ENCODE measurements at regions of chr1 and their contacts with region 1.

Region 1: GRCh38 chr1:84143796-84144565 is at the start of gene PRKACB:
- DNase-seq: peak; percentile 52 to 68 (median 58)
- H3K4me3 ChIP-seq: peak within 1 kb of the TSS; percentile 49 to 93
- H3K4me3 Mint-ChIP-seq: peak within 1 kb of the TSS; percentile 94 to 100 (median 98)
- H3K27ac ChIP-seq: peak within 1 kb of the TSS; percentile 54
- H3K27ac Mint-ChIP-seq: peak within 1 kb of the TSS; percentile 91 to 99 (median 97)
- H3K4me1 ChIP-seq: peaks cover 44% of the 10 kb centered on the region
- H3K4me1 Mint-ChIP-seq: peaks cover 22 to 57% (median 30%) of the 10 kb centered on the region in 4 donors
- H3K27me3 ChIP-seq: no peaks in the 10 kb centered on the region
- H3K27me3 Mint-ChIP-seq: no peaks in the 10 kb centered on the region
- total RNA-seq, gene PRKACB: 128 to 131 TPM

Region 2: DNA sequence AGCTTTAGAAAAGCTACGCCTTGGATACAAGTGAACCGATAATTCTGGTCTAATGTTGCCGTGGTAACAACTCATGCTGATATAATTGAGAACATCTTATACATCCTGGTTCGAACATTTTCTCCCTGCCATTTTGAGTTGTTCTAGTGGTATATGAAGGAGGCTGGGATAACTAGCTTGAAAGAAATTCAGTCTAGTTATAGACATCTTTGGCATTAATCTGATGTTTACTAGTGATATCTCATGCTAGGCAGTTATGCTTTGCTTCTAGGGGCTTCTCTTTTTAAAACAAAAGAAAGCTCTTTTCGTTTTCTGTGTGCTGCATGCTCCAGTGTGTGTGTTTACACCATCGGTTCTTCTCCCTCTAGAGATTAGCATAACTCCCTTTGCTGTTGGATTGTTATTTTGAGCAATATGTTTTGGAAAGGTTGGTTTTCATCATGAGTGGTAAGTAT is 20.6 kb after region 1 on chr1:
- CTCF ChIA-PET with region 1: interaction called, 4 read pairs
- POLR2A ChIA-PET with region 1: interaction called, 14 read pairs
- intact Hi-C with region 1: no loop called
- DNase-seq: no peak
- H3K4me3 ChIP-seq: no peak overlapping the region
- H3K4me3 Mint-ChIP-seq: peak overlapping the region; percentile 22 to 55 (median 50)
- H3K27ac ChIP-seq: no peak overlapping the region
- H3K27ac Mint-ChIP-seq: peak overlapping the region in 3 of 7 donors; percentile 2 to 19 (median 10)
- H3K4me1 ChIP-seq: peaks cover 82% of the 10 kb centered on the region
- H3K4me1 Mint-ChIP-seq: peaks cover 60 to 84% (median 74%) of the 10 kb centered on the region in 4 donors
- H3K27me3 ChIP-seq: no peaks in the 10 kb centered on the region
- H3K27me3 Mint-ChIP-seq: no peaks in the 10 kb centered on the region

Region 3: GRCh38 chr1:84301004-84301784 is 157.2 kb after region 1 on chr1 and contains the start of gene SAMD13:
- CTCF ChIA-PET with region 1: interaction called, 6 read pairs
- POLR2A ChIA-PET with region 1: interaction called, 5 read pairs
- intact Hi-C with region 1: loop called (anchors 2 kb)
- DNase-seq: peak; percentile 37 to 51 (median 47)
- H3K4me3 ChIP-seq: no peak within 1 kb of the TSS
- H3K4me3 Mint-ChIP-seq: peak within 1 kb of the TSS in 7 of 8 donors; percentile 15 to 64 (median 33)
- H3K27ac ChIP-seq: no peak within 1 kb of the TSS
- H3K27ac Mint-ChIP-seq: no peak within 1 kb of the TSS
- H3K4me1 ChIP-seq: peaks cover 35% of the 10 kb centered on the region
- H3K4me1 Mint-ChIP-seq: peaks cover 13 to 40% (median 31%) of the 10 kb centered on the region in 4 donors
- H3K27me3 ChIP-seq: peaks cover 3% of the 10 kb centered on the region
- H3K27me3 Mint-ChIP-seq: peaks cover 4 to 17% of the 10 kb centered on the region in 2 donors
- total RNA-seq, gene SAMD13: not detected

Region 4: DNA sequence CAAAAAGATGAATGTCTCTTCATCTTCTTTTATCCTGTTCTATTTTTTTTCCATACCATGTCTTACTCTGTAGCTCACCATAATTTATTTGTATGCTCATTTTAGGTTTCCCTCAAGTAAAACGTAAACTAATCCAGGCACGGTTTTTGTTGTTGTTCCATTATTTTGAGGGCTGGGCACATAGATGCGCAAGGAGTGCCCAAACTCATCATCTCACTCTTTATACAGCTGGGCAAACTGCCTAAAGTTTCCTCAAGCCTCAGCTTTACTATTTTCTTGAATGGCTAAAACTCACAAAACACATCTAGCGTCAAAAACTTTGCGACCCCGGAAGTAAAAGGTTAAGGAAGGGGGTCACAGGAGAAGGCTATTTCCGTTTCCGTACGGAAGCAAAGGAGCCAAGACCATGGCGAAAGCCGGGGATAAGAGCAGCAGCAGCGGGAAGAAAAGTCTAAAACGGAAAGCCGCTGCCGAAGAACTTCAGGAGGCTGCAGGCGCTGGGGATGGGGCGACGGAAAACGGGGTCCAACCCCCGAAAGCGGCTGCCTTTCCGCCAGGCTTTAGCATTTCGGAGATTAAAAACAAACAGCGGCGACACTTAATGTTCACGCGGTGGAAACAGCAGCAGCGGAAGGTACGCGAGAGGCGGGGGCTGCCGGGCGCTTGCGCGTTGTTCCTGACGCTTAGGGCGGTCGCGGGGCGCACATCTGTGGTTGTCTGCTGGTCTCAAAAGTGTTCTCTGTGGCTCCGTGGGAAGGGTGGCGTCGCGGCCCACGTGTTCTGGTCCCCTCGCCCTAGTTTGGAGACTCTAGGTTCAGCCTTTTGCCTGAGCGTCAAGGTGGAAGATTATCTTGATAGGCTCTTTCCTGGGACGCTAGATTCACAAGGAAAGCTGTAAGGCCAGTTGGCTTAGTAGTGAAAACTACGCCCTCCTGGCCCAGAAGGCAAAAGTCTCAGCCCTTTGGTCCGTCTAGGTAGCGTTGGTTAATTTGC is 335.2 kb after region 1 on chr1 and contains the start of gene RPF1:
- CTCF ChIA-PET with region 1: interaction called, 6 read pairs
- POLR2A ChIA-PET with region 1: interaction called, 19 read pairs
- intact Hi-C with region 1: loop called (anchors 1 kb)
- DNase-seq: peak; percentile 83 to 86 (median 85)
- H3K4me3 ChIP-seq: peak within 1 kb of the TSS; percentile 93
- H3K4me3 Mint-ChIP-seq: peak within 1 kb of the TSS; percentile 96 to 100 (median 99)
- H3K27ac ChIP-seq: peak within 1 kb of the TSS; percentile 65
- H3K27ac Mint-ChIP-seq: peak within 1 kb of the TSS; percentile 96 to 99 (median 98)
- H3K4me1 ChIP-seq: peaks cover 41% of the 10 kb centered on the region
- H3K4me1 Mint-ChIP-seq: peaks cover 31 to 54% (median 41%) of the 10 kb centered on the region in 4 donors
- H3K27me3 ChIP-seq: no peaks in the 10 kb centered on the region
- H3K27me3 Mint-ChIP-seq: peaks cover 13 to 21% of the 10 kb centered on the region in 2 donors
- total RNA-seq, gene RPF1: 41.7 to 46.2 TPM

Region 5: DNA sequence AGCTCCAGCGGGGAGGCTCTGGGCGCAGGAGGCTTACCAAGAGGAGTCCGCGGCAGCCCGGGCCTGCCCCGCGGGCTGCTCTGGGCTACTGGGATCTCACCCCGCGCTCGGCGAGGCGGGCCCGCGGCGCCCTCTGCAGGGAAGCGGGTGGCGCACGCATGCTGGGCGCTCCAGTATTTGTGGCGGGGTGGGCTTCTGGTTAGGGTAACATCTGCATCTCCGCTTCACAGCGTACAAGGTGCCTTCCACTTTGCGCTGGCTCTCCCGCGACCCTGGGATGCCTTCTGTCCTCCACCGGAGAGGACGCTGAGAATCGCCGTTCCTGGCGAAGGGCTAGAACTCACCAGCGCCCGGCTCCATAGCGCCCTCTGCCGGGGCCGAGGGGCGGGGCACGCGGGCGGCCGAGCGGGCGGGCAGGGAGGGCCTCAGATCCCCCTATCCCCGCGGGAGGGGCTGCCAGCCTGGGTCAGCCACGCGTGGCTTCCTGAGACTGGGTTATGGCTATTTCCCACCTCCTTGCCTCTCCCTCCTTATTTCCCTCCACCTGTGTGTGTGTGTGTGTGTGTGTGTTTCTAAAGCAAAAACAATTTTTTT is 476.8 kb after region 1 on chr1:
- CTCF ChIA-PET with region 1: interaction called, 13 read pairs
- POLR2A ChIA-PET with region 1: interaction called, 4 read pairs
- intact Hi-C with region 1: loop called (anchors 1 kb)
- DNase-seq: peak; percentile 72 to 90 (median 82)
- H3K4me3 ChIP-seq: peak overlapping the region; percentile 47 to 69
- H3K4me3 Mint-ChIP-seq: peak overlapping the region; percentile 89 to 96 (median 93)
- H3K27ac ChIP-seq: no peak overlapping the region
- H3K27ac Mint-ChIP-seq: peak overlapping the region in 6 of 7 donors; percentile 9 to 94 (median 84)
- H3K4me1 ChIP-seq: peaks cover 5% of the 10 kb centered on the region
- H3K4me1 Mint-ChIP-seq: peaks cover 3 to 19% (median 5%) of the 10 kb centered on the region in 4 donors
- H3K27me3 ChIP-seq: no peaks in the 10 kb centered on the region
- H3K27me3 Mint-ChIP-seq: peaks cover 0 to 6% of the 10 kb centered on the region in 2 donors

Region 6: GRCh38 chr1:84753516-84754385 is 609.8 kb after region 1 on chr1:
- CTCF ChIA-PET with region 1: interaction called, 23 read pairs
- POLR2A ChIA-PET with region 1: no interaction called
- intact Hi-C with region 1: loop called (anchors 1 kb)
- DNase-seq: peak; percentile 61 to 70 (median 65)
- H3K4me3 ChIP-seq: no peak overlapping the region
- H3K4me3 Mint-ChIP-seq: peak overlapping the region in 2 of 8 donors; percentile 0 to 17
- H3K27ac ChIP-seq: no peak overlapping the region
- H3K27ac Mint-ChIP-seq: peak overlapping the region in 1 of 7 donors; percentile 77
- H3K4me1 ChIP-seq: no peaks in the 10 kb centered on the region
- H3K4me1 Mint-ChIP-seq: peaks cover 0 to 8% (median 4%) of the 10 kb centered on the region in 4 donors
- H3K27me3 ChIP-seq: no peaks in the 10 kb centered on the region
- H3K27me3 Mint-ChIP-seq: peaks cover 12 to 26% of the 10 kb centered on the region in 2 donors

Region 7: DNA sequence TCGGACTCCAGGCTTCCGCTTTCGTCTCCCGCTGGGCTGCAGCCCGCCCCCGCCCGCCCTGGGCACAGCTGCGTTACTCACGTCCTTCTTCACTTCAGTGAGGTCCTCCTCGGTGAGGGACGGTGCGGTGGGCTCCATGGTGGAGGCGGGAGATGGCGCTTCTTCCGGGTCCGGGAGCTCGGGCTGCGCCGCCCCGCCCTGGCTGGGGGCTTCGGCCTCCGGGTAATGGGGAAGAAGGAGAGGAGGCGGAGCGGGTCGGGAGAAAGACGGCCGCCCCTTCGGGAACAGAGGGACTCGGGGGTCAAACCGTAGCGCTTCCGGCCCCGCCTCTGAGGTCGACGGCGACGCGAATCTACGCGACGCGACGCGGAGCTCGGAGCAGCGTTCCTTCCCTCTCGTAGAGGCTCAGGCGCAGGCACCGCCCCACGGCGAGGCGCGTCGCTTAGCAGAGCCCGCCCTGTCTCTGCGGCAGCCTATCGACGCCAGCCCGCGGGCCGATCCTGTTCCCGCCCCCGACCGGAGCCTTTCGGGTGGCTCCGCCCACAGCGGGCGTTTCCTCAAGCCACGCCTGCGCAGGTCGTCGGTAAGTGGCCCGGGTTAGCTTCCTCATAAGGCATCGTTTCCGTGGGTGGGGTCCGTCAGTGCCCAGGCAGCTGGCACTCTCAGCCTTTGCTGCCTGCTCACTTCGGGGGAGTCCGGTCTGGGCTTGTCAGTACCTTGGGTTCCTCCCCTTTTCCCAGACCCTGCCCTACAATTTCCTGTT is 1132.4 kb after region 1 on chr1 and contains the start of gene BCL10:
- CTCF ChIA-PET with region 1: no interaction called
- POLR2A ChIA-PET with region 1: interaction called, 12 read pairs
- intact Hi-C with region 1: loop called (anchors 10 kb)
- DNase-seq: peak; percentile 96 to 98 (median 97)
- H3K4me3 ChIP-seq: peak within 1 kb of the TSS; percentile 75 to 94
- H3K4me3 Mint-ChIP-seq: peak within 1 kb of the TSS; percentile 88 to 93 (median 92)
- H3K27ac ChIP-seq: peak within 1 kb of the TSS; percentile 94
- H3K27ac Mint-ChIP-seq: peak within 1 kb of the TSS; percentile 94 to 97 (median 96)
- H3K4me1 ChIP-seq: peaks cover 55% of the 10 kb centered on the region
- H3K4me1 Mint-ChIP-seq: peaks cover 42 to 62% (median 53%) of the 10 kb centered on the region in 4 donors
- H3K27me3 ChIP-seq: no peaks in the 10 kb centered on the region
- H3K27me3 Mint-ChIP-seq: no peaks in the 10 kb centered on the region
- total RNA-seq, gene BCL10: 36.1 to 37.0 TPM

Measured in CD4-positive, alpha-beta memory T cell (primary cell).